Lower leg skin (tissue), 4 donors: ENCODE measurements at regions of chr1 and their contacts with region 1.

Region 1: DNA sequence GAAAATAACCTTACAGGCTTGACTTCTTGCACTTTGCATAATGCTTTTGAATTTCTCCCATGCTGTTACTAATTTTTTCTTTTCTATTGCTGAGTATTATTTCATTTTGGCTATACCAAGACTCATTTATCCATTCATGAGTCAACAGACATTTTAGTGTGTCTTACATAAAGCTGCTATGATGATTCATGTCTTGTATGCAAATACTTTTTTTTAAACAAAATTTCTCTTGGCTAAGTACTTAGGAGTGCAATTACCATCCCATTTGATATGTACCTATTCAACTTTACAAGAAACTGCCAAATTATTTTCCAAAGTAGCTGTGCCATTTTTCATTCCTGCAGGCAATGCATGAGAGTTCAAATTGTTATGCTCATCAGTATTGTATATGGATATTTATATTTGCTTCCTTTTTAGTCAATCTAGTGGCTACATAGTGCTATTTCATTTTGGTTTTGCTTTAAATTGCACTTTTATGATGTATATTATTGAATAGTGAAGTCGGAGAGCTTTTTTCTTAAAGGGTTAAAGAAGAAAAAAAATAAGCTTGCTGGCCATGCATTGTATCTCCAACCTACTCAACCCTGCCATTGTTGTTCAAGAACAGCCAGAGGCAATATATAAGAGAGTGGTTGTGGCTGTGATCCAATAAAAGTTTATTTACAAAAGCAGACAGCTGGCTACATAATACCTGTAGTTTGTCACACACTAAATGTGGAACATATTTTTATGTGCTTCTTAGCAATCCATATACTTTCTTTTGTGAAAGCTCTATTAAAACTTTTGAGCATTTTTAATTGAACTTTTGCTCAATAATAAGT is 862.8 kb downstream of the KCNT2 start:
- DNase-seq: no peak
- H3K4me3 ChIP-seq: no peak overlapping the region
- CTCF ChIP-seq: no peak
- POLR2A ChIP-seq: no peak

Region 2: GRCh38 chr1:194378517-194378916 is 1366.9 kb before region 1 on chr1:
- intact Hi-C with region 1: loop called (anchors 5 kb)
- DNase-seq: no peak
- H3K4me3 ChIP-seq: no peak overlapping the region
- CTCF ChIP-seq: no peak
- POLR2A ChIP-seq: no peak

Region 3: DNA sequence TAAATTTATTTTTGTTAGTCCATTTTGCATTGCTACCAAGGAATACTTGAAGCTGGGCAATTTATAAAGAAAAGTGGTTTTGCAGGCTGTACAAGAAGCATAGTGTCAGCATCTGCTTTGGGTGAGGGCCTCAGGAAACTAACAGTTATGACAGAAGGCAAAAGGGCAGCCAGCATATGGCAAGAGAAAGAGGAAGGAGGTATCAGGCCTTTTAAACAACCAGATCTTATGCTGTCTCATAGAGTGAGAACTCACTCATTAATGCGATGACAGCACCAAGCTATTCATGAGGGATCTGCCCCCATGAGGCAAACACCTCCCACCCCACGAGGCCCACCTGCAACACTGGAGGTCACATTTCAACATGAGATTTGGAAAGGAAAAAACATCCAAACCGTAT is 35.6 kb before region 1 on chr1:
- intact Hi-C with region 1: no loop called
- DNase-seq: no peak
- H3K4me3 ChIP-seq: no peak overlapping the region
- CTCF ChIP-seq: no peak
- POLR2A ChIP-seq: no peak